HCT116 (cell line): ENCODE measurements at regions of chr1 and their contacts with region 1.

Region 1: GRCh38 chr1:178749581-178750166 is 24.6 kb downstream of the RALGPS2 start:
- DNase-seq: no peak
- ATAC-seq: no peak
- H3K4me3 ChIP-seq: no peak overlapping the region
- H3K27ac ChIP-seq: no peak overlapping the region
- H3K4me1 ChIP-seq: peaks cover 0 to 12% of the 10 kb centered on the region in 2 experiments; a peak in 1 of 4 replicates
- H3K27me3 ChIP-seq: no peaks in the 10 kb centered on the region
- CTCF ChIP-seq: no peak
- POLR2A ChIP-seq: no peak
- RAD21 ChIP-seq: no peak

Region 2: GRCh38 chr1:178310685-178311105 is 439.0 kb before region 1 on chr1:
- CTCF ChIA-PET with region 1: interaction called, 3 read pairs
- POLR2A ChIA-PET with region 1: no interaction called
- RAD21 ChIA-PET with region 1: no interaction called
- intact Hi-C with region 1: loop called (anchors 5 kb)
- DNase-seq: peak; percentile 64
- ATAC-seq: peak; percentile 91
- H3K4me3 ChIP-seq: no peak overlapping the region
- H3K27ac ChIP-seq: no peak overlapping the region
- H3K4me1 ChIP-seq: peaks cover 8 to 15% of the 10 kb centered on the region in 2 experiments; a peak in 3 of 4 replicates
- H3K27me3 ChIP-seq: no peaks in the 10 kb centered on the region
- CTCF ChIP-seq: peak; percentile 58 to 88 (median 87)
- POLR2A ChIP-seq: no peak
- RAD21 ChIP-seq: peak; percentile 92

Region 3: GRCh38 chr1:178542560-178543356 is 206.9 kb before region 1 on chr1:
- CTCF ChIA-PET with region 1: interaction called, 21 read pairs
- POLR2A ChIA-PET with region 1: no interaction called
- RAD21 ChIA-PET with region 1: interaction called, 8 to 11 read pairs
- intact Hi-C with region 1: loop called (anchors 1 kb)
- DNase-seq: peak; percentile 43
- ATAC-seq: peak; percentile 88
- H3K4me3 ChIP-seq: peak overlapping the region; percentile 61 to 69
- H3K27ac ChIP-seq: peak overlapping the region; percentile 64
- H3K4me1 ChIP-seq: peaks cover 17 to 33% of the 10 kb centered on the region in 2 experiments
- H3K27me3 ChIP-seq: no peaks in the 10 kb centered on the region
- CTCF ChIP-seq: peak; percentile 84 to 98 (median 88)
- POLR2A ChIP-seq: no peak
- RAD21 ChIP-seq: peak; percentile 85